ENCODE measurements at regions of chr1 and their contacts with region 1.

Region 1: GRCh38 chr1:210855440-210855839 is 278.5 kb downstream of the KCNH1 start:
- DNase-seq: no peak
- ATAC-seq: no peak

Region 2: GRCh38 chr1:209250861-209251637 is 1604.4 kb before region 1 on chr1:
- intact Hi-C with region 1: loop called (anchors 5 kb)
- DNase-seq: no peak
- ATAC-seq: no peak

Region 3: GRCh38 chr1:211210965-211211364 is 355.5 kb after region 1 on chr1:
- intact Hi-C with region 1: no loop called
- DNase-seq: no peak
- ATAC-seq: no peak

Region 4: GRCh38 chr1:211788626-211789025 is 933.2 kb after region 1 on chr1:
- intact Hi-C with region 1: no loop called
- DNase-seq: no peak
- ATAC-seq: no peak